ENCODE measurements at regions of chr1 and their contacts with region 1.

Region 1: DNA sequence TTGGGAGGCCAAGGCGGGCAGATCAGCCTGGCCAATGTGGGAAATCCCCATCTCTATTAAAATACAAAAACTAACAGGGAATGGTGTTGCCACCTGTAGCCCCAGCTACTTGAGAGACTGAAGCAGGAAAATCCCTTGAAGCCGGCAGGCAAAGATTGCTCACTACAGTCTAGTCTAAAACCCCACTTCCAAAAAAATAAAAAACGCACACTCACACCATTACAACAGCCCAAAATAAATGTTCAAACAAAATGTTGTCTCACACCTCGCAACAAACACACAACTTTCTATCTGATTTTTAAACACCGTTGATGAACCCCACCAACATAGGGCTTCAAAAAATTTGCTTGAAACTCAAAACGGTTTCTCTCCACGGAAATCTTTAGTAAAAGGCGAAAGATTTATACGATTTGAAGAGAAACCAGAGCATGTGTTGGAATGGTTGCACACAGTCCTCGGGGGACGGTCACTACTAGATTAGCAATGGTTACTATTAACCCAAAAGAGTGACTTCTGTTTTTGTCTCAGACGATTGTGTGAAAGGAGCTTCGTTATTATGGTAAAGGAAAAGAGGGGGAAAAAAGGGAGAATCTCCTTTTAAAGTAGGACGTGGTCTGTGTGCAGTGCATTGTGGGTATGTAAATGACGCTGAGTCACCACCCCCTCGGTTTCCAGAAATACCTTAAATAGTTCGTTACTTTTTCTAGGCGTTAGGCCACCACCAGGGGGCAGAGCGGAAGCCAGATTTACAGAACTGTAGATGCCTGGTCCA is at the start of gene RNU5D-1:
- DNase-seq: peak; percentile 96
- H3K4me3 Mint-ChIP-seq: peak within 1 kb of the TSS; percentile 69
- H3K27ac Mint-ChIP-seq: peak within 1 kb of the TSS; percentile 100
- H3K4me1 Mint-ChIP-seq: peaks cover 37% of the 10 kb centered on the region
- H3K27me3 Mint-ChIP-seq: peaks cover 3% of the 10 kb centered on the region
- total RNA-seq, gene RNU5D-1: not detected

Region 2: DNA sequence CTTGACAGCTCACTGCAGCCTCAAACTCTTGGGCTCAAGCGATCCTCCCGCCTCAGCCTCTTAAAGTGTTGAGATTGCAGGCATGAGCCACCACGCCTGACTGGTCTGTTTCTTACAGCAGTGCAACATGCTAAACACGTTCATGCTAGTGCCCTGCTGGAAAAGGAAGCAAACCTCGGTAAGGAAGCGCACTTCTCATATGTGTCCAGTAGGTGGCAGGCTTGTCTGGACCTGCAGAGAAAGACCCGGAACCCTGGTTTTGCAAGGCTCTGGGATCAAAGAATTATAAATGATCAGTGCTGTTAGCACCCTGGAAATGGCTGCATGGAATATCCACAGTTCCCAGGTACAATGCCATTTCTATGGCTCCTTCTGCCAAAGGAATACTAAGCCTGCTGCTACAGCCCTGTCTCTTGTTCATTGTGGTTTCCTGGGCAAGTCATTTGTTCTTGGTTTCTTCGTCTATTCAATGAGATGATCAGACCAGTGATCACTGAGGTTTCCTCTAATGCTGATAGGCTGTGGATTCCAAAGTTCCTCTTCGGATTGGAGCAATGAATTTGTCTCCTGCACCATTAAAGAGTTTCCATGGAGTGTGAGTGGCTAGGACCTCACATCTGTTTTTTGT is 15.9 kb before region 1 on chr1:
- CTCF ChIA-PET with region 1: interaction called, 65 read pairs
- POLR2A ChIA-PET with region 1: interaction called, 461 read pairs
- intact Hi-C with region 1: loop called (anchors 2 kb)
- DNase-seq: peak; percentile 78
- H3K4me3 Mint-ChIP-seq: peak overlapping the region; percentile 37
- H3K27ac Mint-ChIP-seq: no peak overlapping the region
- H3K4me1 Mint-ChIP-seq: peaks cover 46% of the 10 kb centered on the region
- H3K27me3 Mint-ChIP-seq: no peaks in the 10 kb centered on the region

Region 3: GRCh38 chr1:44786138-44786840 is 55.4 kb after region 1 on chr1:
- CTCF ChIA-PET with region 1: interaction called, 5 read pairs
- POLR2A ChIA-PET with region 1: interaction called, 28 read pairs
- intact Hi-C with region 1: loop called (anchors 2 kb)
- DNase-seq: peak; percentile 83
- H3K4me3 Mint-ChIP-seq: peak overlapping the region; percentile 73
- H3K27ac Mint-ChIP-seq: peak overlapping the region; percentile 31
- H3K4me1 Mint-ChIP-seq: peaks cover 31% of the 10 kb centered on the region
- H3K27me3 Mint-ChIP-seq: no peaks in the 10 kb centered on the region

Region 4: GRCh38 chr1:44807262-44808062 is 76.5 kb after region 1 on chr1 and contains the start of gene DYNLT4:
- CTCF ChIA-PET with region 1: interaction called, 26 read pairs
- POLR2A ChIA-PET with region 1: interaction called, 77 read pairs
- intact Hi-C with region 1: loop called (anchors 1 kb)
- DNase-seq: peak; percentile 95
- H3K4me3 Mint-ChIP-seq: peak within 1 kb of the TSS; percentile 73
- H3K27ac Mint-ChIP-seq: peak within 1 kb of the TSS; percentile 98
- H3K4me1 Mint-ChIP-seq: peaks cover 90% of the 10 kb centered on the region
- H3K27me3 Mint-ChIP-seq: no peaks in the 10 kb centered on the region
- total RNA-seq, gene DYNLT4: 0.40 to 0.41 TPM

Region 5: GRCh38 chr1:44819608-44820327 is 88.8 kb after region 1 on chr1:
- CTCF ChIA-PET with region 1: interaction called, 48 read pairs
- POLR2A ChIA-PET with region 1: interaction called, 151 read pairs
- intact Hi-C with region 1: loop called (anchors 1 kb)
- DNase-seq: peak; percentile 89
- H3K4me3 Mint-ChIP-seq: peak overlapping the region; percentile 89
- H3K27ac Mint-ChIP-seq: peak overlapping the region; percentile 99
- H3K4me1 Mint-ChIP-seq: peaks cover 42% of the 10 kb centered on the region
- H3K27me3 Mint-ChIP-seq: no peaks in the 10 kb centered on the region

Region 6: DNA sequence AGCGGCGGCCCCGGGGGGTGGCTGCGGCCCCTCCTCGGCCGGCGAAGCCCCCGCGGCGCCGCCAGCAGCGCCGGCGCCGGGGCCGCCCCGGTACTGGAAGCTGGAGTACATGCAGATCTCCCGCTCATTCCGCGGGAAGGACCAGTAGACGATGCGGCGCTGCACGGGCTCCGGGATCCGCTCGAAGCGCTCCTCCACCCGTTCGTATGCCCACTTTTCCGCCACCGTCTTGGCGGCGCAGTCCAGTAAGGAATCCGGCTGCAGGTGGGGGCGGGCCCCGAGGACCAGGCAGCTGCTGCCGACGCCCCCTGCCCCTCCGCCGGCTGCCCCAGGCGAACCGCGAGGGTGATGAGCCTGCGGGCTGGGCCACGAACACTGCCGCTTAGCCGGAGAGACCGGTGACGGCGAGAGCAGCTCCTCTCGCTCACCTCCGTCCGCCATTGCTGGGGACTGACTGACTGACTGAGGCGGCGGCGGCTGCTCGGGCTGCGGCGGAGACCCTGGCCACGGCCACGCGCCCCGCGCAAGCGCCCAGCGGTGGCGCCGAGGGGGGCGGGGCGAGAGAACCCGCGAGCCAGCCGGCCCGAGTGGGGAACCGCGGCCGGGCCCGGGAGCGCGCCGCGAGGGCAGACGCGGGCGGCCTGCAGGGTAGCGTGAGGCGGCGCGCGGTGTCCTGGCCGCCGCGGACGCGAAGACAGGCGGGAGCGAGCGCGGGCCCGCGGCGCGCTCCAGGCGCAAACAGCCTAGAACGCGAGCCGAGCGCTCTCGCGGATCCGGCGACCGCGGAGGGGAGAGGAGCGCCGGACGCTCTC is 475.2 kb after region 1 on chr1 and contains the start of gene ZSWIM5:
- CTCF ChIA-PET with region 1: no interaction called
- POLR2A ChIA-PET with region 1: no interaction called
- intact Hi-C with region 1: loop called (anchors 10 kb)
- DNase-seq: peak; percentile 71
- H3K4me3 Mint-ChIP-seq: peak within 1 kb of the TSS; percentile 83
- H3K27ac Mint-ChIP-seq: peak within 1 kb of the TSS; percentile 57
- H3K4me1 Mint-ChIP-seq: peaks cover 35% of the 10 kb centered on the region
- H3K27me3 Mint-ChIP-seq: no peaks in the 10 kb centered on the region
- total RNA-seq, gene ZSWIM5: 0.51 to 0.59 TPM